SK-N-SH (cell line): ENCODE measurements at regions of chr11 and their contacts with region 1.

Region 1: DNA sequence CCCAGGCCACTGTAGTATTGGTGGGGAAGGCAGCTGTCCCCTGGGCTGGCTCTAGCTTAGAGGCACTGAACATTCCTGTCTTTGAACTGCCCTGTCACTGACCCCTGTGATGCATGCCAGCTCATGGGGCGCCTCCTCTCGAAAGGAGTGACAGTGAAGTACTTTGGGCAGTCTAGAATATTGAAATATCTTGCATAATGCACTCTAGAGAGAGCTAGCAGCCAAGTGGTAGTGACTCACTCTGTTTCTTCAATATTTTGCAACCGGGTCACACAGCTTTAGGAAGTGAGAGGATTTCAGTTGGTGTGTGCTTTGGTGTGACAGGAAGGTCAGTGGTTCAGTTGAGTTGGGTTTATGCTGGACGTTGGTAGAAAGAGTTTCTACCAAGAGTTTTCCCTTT is 35.5 kb upstream of the ST14 start:
- DNase-seq: no peak
- H3K4me3 ChIP-seq: no peak overlapping the region
- H3K27ac ChIP-seq: peak overlapping the region in 1 of 2 experiments; percentile 48; a peak in 2 of 4 replicates
- H3K4me1 ChIP-seq: peaks cover 0 to 2% of the 10 kb centered on the region in 2 experiments; a peak in 1 of 4 replicates
- H3K27me3 ChIP-seq: no peaks in the 10 kb centered on the region
- CTCF ChIP-seq: no peak
- EP300 ChIP-seq: no peak
- RAD21 ChIP-seq: no peak

Region 2: GRCh38 chr11:129922674-129923073 is 201.4 kb before region 1 on chr11:
- CTCF ChIA-PET with region 1: interaction called, 10 read pairs
- POLR2A ChIA-PET with region 1: no interaction called
- DNase-seq: no peak
- H3K4me3 ChIP-seq: no peak overlapping the region
- H3K27ac ChIP-seq: no peak overlapping the region
- H3K4me1 ChIP-seq: no peaks in the 10 kb centered on the region
- H3K27me3 ChIP-seq: no peaks in the 10 kb centered on the region
- CTCF ChIP-seq: no peak
- EP300 ChIP-seq: no peak
- RAD21 ChIP-seq: no peak